MCF 10A (cell line): ENCODE measurements at regions of chr3 and their contacts with region 1.

Region 1: GRCh38 chr3:160941885-160942494 is 163.2 kb downstream of the B3GALNT1 start:
- DNase-seq: peak; percentile 84
- H3K4me3 Mint-ChIP-seq: no peak overlapping the region
- H3K27ac Mint-ChIP-seq: no peak overlapping the region
- H3K4me1 Mint-ChIP-seq: no peaks in the 10 kb centered on the region
- H3K27me3 Mint-ChIP-seq: no peaks in the 10 kb centered on the region
- CTCF ChIP-seq: peak; percentile 89

Region 2: GRCh38 chr3:160577556-160578195 is 364.3 kb before region 1 on chr3:
- CTCF ChIA-PET with region 1: interaction called, 7 read pairs
- POLR2A ChIA-PET with region 1: no interaction called
- intact Hi-C with region 1: loop called (anchors 5 kb)
- DNase-seq: peak; percentile 63
- H3K4me3 Mint-ChIP-seq: no peak overlapping the region
- H3K27ac Mint-ChIP-seq: no peak overlapping the region
- H3K4me1 Mint-ChIP-seq: no peaks in the 10 kb centered on the region
- H3K27me3 Mint-ChIP-seq: no peaks in the 10 kb centered on the region
- CTCF ChIP-seq: no peak

Region 3: DNA sequence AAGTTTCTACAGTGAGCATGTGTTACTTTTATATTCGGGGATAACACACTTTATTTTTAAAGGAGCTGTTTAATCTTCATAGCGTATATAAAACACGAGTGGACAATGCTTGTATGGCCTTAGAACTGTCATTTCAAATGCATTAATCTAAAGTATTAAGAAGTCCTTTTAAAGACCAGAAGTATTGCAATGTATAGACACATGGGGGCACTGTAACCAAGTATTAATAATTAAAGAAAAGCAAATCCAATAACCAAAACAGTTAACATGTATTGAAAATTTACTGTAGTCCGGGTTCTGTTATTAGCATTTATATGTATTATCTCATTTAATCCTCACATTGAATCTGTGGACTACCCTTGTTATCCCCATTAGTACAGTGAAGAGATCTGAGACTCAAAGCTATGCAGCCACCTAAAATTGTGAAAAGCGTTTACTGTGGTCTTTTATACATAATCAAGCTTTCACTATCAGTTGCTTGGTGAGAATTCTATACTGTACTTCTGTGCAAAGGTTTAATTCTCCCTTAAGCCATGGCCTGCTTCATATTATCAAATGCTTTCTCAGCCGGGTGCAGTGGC is 254.9 kb before region 1 on chr3:
- CTCF ChIA-PET with region 1: interaction called, 6 read pairs
- POLR2A ChIA-PET with region 1: no interaction called
- intact Hi-C with region 1: loop called (anchors 1 kb)
- DNase-seq: peak; percentile 30
- H3K4me3 Mint-ChIP-seq: no peak overlapping the region
- H3K27ac Mint-ChIP-seq: no peak overlapping the region
- H3K4me1 Mint-ChIP-seq: no peaks in the 10 kb centered on the region
- H3K27me3 Mint-ChIP-seq: no peaks in the 10 kb centered on the region
- CTCF ChIP-seq: peak; percentile 24

Region 4: DNA sequence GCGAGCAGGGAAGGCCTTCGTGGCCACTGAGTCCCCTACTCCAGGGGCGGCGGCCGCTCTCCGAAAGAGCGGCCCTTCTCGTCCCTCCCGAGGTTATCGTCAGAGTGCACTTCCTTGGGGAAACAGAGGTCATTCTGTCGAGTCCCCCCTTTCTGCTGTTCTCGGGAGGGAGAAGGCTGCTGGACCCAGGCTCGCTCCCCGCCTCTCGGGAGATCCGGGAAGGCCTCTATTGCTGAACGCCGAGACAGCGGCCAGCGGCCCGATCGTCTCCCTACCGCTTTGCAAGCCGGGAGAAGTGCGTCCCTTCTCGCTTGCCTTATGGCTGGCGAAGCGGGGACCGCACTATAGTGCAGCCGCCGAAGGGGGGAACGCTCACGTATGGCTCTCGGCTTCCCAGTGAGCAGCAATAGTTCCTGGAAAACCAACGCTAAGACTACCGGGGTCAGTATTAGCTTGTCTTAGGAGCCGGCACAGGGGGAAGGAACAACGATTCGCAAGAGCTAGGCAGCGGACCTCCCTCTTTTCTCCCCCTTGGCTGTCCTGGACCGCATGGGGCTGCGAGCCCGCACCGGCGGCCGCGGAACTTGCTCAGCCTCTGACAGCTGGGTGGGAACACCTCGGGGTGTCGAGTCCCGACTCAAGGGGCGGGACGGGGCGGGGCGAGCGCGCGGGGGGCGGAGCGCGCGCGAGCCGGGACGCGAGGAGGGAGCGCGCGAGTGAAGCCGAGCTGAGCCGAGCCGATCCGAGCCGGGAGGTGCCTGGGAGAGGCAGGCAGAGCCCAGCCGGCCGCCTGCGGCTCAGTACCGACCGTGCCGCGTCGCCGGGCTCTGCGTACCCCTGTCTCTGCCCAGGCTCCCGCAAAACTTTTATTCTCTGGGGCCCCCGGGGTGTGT is 186.9 kb before region 1 on chr3:
- CTCF ChIA-PET with region 1: interaction called, 38 read pairs
- POLR2A ChIA-PET with region 1: interaction called, 6 read pairs
- intact Hi-C with region 1: loop called (anchors 1 kb)
- DNase-seq: peak; percentile 93
- H3K4me3 Mint-ChIP-seq: peak overlapping the region; percentile 95
- H3K27ac Mint-ChIP-seq: peak overlapping the region; percentile 87
- H3K4me1 Mint-ChIP-seq: peaks cover 13% of the 10 kb centered on the region
- H3K27me3 Mint-ChIP-seq: no peaks in the 10 kb centered on the region
- CTCF ChIP-seq: no peak

Region 5: GRCh38 chr3:160921020-160921635 is 20.9 kb before region 1 on chr3:
- CTCF ChIA-PET with region 1: interaction called, 30 read pairs
- POLR2A ChIA-PET with region 1: interaction called, 4 read pairs
- intact Hi-C with region 1: no loop called
- DNase-seq: peak; percentile 52
- H3K4me3 Mint-ChIP-seq: no peak overlapping the region
- H3K27ac Mint-ChIP-seq: no peak overlapping the region
- H3K4me1 Mint-ChIP-seq: no peaks in the 10 kb centered on the region
- H3K27me3 Mint-ChIP-seq: no peaks in the 10 kb centered on the region
- CTCF ChIP-seq: peak; percentile 71

Region 6: DNA sequence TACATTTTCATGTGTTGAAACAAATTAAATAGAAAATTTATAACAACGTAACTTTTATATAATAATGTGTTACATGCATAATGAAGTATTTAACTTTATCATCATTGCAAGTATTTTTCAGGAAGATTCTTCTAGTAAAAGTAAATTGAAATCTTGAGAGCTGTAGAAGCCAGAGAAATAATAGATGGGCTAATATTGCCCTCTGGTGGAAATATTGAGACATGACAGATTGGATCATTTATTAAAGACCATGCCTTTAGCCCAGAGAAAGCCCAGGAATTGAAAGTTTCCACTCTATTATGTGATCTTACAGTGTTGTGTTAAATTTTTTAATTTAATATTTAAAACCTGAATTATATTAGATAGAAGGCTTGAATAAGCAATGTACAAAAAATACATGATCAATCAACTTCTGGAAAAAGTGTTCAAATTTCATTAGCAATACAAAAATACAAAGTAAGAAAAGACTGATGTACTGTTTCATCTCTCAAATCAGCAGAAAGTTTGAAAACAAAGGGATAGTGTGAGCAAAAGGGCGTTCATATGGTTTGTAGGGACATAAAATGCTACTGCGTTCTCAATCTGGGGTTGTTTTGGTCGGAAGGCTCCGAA is 482.0 kb after region 1 on chr3:
- CTCF ChIA-PET with region 1: interaction called, 4 read pairs
- POLR2A ChIA-PET with region 1: no interaction called
- intact Hi-C with region 1: loop called (anchors 1 kb)
- DNase-seq: peak; percentile 64
- H3K4me3 Mint-ChIP-seq: no peak overlapping the region
- H3K27ac Mint-ChIP-seq: no peak overlapping the region
- H3K4me1 Mint-ChIP-seq: peaks cover 8% of the 10 kb centered on the region
- H3K27me3 Mint-ChIP-seq: no peaks in the 10 kb centered on the region
- CTCF ChIP-seq: peak; percentile 44